Ascending aorta (tissue), 2 donors: ENCODE measurements at regions of chr13 and their contacts with region 1.

Region 1: DNA sequence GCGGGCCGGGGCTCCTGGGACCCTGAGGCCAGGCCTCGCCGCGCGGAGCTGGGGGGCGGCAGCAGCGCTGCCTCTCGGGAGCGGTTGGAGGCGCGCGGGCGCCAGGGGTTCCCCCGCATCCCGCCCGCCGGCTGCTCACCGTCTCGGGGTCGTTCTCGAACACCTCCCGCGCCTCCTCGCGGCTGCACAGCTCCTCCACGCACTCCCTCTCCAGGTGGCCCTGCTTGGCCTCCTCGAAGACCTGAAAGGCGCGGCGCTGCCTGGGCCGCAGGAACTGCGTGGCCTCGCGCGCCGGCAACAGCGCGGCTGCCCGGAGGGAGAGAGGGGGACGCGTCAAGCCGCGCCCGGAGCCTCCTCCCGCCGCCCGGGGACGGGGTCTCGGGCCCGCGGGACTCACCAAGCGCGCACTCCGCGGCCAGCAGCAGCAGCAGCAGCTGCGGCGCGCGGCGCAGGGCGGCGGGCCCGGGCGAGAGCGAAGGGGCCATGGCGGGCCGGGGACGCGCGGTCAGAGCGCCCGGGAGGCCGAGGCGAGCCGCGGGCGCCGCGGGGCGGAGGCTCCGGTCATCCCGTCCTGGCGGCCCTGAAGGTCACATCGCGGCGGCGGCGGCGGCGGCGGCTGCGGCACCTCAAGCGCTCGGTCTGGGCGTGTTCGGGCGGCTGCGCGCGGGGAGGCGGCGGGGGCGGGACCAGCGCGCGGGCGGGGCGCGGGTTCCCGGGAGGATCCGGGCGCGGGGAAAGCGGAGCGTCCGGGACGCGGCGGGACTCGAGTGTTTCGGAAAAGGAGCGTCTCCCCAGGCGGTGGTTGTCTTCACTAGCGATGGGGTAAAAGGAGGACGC is at the start of gene GAS6:
- DNase-seq: peak in 1 of 2 donors; percentile 83
- H3K4me3 ChIP-seq: peak within 1 kb of the TSS; percentile 71 to 91
- H3K27ac ChIP-seq: peak within 1 kb of the TSS; percentile 89 to 96
- H3K4me1 ChIP-seq: peaks cover 7 to 22% of the 10 kb centered on the region in 2 donors
- H3K27me3 ChIP-seq: no peaks in the 10 kb centered on the region
- CTCF ChIP-seq: no peak
- total RNA-seq, gene GAS6: 502 TPM

Region 2: DNA sequence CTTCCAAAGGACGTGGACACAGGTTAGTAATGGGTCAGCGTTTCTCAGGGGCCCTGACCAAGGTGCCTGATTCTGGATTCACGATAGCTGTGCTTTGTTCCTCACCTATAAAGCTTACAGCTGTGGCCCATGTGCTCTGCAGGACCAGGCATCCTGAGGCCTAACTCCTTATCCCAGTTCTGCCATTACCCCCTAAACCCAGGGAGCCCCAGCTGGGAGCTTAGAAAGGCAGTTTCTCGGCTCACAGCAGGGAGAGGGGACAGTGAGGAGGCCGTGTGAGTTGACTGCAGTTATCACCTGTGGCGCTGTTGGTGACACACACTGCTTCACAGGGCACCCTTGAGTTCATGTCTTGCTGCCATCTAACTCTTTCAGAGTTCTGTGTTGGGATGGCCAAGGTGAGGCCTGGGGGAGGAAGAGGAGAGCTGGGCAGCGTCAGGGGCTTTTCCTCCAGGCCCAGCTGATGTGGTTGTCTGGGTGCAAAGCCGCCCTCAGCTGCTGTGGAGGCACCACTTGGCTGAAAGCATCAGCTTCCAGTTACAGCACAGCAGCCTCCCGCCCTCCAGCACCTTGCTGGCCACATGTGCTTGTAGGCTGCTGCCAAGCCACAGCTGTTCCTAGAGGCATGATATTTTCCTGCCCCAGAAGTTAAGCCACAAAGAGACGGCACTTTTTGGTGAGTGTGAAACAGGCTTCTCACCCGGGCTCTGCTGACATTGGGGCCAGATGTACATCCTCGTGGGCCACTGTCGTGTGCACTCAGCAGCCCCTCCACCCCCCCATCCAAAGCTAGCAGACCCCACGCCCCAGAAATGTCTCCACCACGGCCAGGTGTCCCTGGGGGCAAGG is 994.2 kb before region 1 on chr13:
- intact Hi-C with region 1: no loop called
- DNase-seq: peak in 1 of 2 donors; percentile 49
- H3K4me3 ChIP-seq: no peak overlapping the region
- H3K27ac ChIP-seq: no peak overlapping the region
- H3K4me1 ChIP-seq: peaks cover 0 to 2% of the 10 kb centered on the region in 2 donors
- H3K27me3 ChIP-seq: no peaks in the 10 kb centered on the region
- CTCF ChIP-seq: no peak

Region 3: GRCh38 chr13:113410472-113411201 is 453.0 kb before region 1 on chr13:
- intact Hi-C with region 1: loop called (anchors 10 kb)
- DNase-seq: peak; percentile 35 to 92
- H3K4me3 ChIP-seq: peak overlapping the region in 1 of 2 donors; percentile 31
- H3K27ac ChIP-seq: peak overlapping the region; percentile 84 to 97
- H3K4me1 ChIP-seq: peaks cover 15 to 39% of the 10 kb centered on the region in 2 donors
- H3K27me3 ChIP-seq: no peaks in the 10 kb centered on the region
- CTCF ChIP-seq: no peak

Region 4: DNA sequence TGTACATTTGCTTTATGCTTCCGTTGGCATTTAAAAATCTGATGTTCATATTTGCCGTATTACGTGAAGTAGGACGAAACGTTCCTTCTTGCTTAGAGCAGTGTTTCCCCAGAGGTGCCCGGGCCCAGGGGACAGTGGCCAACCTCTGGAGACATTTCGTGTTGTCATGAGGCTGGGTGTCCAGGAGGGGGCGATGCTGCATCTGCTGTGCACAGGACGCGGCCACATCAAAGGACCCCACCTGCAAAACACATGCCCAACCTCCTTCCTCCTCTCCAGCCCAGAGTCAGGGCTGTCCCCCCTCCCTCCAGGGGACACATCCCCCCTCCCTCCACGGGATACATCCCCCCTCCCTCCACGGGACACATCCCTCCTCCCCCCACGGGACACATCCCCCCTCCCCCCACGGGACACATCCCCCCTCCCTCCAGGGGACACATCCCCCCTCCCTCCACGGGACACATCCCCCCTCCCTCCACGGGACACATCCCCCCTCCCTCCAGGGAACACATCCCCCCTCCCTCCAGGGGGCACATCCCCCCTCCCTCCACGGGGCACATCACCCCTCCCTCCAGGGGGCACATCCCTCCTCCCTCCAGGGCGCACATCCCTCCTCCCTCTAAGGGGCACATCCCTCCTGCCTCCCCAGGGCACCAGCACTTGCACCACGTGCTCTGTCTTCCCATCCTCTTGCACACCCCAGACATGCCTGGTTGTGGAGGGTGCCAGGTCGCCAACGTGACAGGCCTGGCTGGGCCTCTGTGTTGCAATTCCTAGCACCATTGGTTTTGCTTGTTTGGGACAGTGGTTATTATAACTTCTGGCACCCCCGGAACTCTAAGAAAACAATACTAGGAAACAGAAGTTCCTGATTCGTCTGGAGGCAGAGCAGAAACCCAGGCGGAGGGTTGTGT is 46.5 kb before region 1 on chr13:
- intact Hi-C with region 1: loop called (anchors 1 kb)
- DNase-seq: peak; percentile 76 to 95
- H3K4me3 ChIP-seq: peak overlapping the region in 1 of 2 donors; percentile 13
- H3K27ac ChIP-seq: peak overlapping the region; percentile 72 to 77
- H3K4me1 ChIP-seq: peaks cover 21 to 39% of the 10 kb centered on the region in 2 donors
- H3K27me3 ChIP-seq: no peaks in the 10 kb centered on the region
- CTCF ChIP-seq: peak; percentile 81 to 91 (median 83)

Region 5: DNA sequence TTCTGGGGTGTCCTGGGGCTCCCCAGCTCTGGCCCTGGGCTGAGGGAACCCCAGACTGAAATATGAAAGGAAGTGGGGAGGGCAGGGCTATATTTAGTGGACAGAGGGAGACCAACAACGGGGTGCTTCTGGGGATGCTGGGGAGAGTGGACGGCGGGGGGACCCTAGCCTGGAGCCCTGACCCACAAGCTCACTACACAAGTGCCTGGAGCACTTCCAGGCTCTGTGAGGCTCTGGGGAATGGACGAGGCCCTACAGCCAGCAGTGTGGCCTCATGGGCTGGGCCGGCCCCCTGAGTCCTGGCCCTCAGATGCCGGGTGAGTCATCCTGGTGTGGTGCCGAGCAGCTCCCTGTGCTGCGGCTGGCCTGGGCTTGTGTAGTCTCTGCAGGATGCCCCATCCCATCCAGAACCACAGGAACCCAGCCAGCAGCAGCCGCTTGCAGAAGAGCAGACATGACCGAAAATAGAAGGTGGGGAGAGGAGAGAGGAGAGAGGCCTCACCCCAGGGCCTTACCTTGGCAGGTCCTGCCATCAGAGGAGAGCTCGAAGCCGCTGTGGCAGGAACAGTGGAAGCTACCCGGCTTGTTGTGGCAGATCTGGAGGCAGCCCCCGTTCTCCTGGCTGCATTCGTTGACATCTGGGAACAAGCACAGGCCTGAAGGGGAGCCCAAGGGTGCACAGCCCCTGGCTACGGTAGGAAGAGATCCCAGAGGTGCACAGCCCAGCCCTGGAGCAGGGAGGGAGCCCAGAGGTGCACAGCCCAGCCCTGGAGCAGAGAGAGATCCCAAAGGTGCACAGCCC is 25.9 kb before region 1 on chr13:
- intact Hi-C with region 1: loop called (anchors 1 kb)
- DNase-seq: peak; percentile 86 to 97
- H3K4me3 ChIP-seq: peak overlapping the region; percentile 14 to 29
- H3K27ac ChIP-seq: peak overlapping the region; percentile 86 to 89
- H3K4me1 ChIP-seq: peaks cover 26 to 42% of the 10 kb centered on the region in 2 donors
- H3K27me3 ChIP-seq: no peaks in the 10 kb centered on the region
- CTCF ChIP-seq: peak in 1 of 3 experiments; percentile 5

Region 6: DNA sequence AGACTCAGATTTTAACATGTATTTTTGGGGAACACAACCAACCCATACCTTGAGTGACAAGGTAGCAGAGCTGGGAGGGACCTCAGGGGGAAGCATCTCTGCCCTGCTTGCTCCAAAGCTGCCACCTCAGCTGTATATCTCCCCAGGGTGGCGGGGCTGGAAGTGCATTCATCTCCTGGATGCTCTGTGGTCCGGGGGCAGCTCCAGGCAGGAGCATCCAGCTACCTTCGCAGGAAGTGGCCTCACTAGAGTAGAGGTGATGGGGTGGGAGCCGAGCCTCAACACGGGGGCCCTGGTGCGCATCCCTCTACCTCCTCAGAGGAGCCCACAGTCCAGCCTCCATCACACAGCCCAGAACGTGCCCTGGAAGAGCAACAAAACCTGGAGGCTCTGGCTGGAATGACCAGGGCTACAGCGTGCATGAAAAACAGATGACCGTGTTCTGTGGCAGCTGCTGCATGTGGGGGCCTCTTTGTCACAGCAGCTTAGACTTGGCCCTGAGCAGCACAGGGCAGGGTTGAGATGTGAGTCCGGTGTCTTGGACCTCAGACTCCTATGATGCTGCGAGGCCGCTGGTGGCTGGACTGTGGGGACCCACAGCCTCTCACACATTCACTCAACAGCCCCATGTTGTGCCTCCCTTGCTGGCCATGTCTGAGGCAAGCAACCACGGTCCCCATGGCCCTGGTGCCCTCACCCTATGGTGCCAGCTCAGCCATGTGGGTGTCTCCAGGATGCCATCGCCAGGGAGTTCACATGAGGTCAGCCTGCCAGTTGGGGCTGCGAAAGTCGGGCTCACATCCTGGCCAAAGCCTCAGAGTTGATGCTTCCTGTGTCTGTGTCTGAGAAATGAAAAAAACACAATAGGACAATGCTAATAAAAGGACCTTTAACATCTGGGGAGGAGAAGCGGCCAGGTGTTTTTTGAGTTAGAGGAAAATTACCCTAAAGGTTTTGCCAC is 17.3 kb after region 1 on chr13:
- intact Hi-C with region 1: loop called (anchors 1 kb)
- DNase-seq: no peak
- H3K4me3 ChIP-seq: no peak overlapping the region
- H3K27ac ChIP-seq: peak overlapping the region; percentile 88
- H3K4me1 ChIP-seq: peaks cover 3 to 42% of the 10 kb centered on the region in 2 donors
- H3K27me3 ChIP-seq: no peaks in the 10 kb centered on the region
- CTCF ChIP-seq: no peak

Region 7: GRCh38 chr13:113904411-113904810 is 40.8 kb after region 1 on chr13:
- intact Hi-C with region 1: loop called (anchors 2 kb)
- DNase-seq: peak in 1 of 2 donors; percentile 72
- H3K4me3 ChIP-seq: no peak overlapping the region
- H3K27ac ChIP-seq: peak overlapping the region; percentile 83 to 93
- H3K4me1 ChIP-seq: peaks cover 7 to 36% of the 10 kb centered on the region in 2 donors
- H3K27me3 ChIP-seq: no peaks in the 10 kb centered on the region
- CTCF ChIP-seq: peak; percentile 27 to 57 (median 51)

Region 8: GRCh38 chr13:113935001-113935844 is 71.6 kb after region 1 on chr13:
- intact Hi-C with region 1: loop called (anchors 5 kb)
- DNase-seq: no peak
- H3K4me3 ChIP-seq: peak overlapping the region in 1 of 2 donors; percentile 20
- H3K27ac ChIP-seq: peak overlapping the region; percentile 79 to 85
- H3K4me1 ChIP-seq: peaks cover 8 to 9% of the 10 kb centered on the region in 2 donors
- H3K27me3 ChIP-seq: no peaks in the 10 kb centered on the region
- CTCF ChIP-seq: no peak